Upper lobe of right lung (tissue), 1 donor: ENCODE measurements at regions of chr4 and their contacts with region 1.

Region 1: DNA sequence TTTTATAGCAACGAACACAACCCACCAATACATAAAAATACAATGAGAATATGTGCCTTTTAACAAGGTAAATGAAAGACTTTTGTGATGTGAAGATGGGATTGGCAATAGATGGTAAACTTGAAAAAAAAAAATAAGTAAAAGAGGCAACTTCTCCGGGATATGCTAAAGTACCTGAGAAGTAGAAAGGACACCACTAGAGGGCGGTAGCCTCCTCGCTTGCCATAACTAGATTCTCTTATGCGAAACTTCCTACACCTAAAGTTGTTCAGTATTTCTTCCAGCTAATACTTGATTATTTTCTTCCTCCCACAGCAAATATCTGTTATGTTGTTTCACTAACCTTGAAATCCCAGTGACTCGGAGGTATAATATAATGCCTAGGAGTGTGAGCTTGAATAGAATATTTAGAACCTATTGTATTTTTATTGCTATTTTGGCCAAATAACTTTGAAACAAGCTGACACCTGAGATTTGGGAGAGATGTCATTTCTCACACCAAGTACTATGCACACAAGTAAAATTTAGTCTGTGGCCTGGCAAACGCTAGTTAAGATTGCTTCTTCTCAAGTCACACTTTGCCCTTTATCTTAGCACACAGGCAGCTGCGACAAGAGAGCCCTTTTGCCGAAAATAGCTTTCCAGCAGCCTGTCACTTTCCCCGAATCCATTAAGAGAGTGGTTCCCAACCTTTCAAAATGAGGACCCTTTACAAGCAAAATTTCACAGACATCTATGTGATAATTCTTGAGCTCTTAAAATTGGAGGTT is 44.9 kb upstream of the PDLIM5 start:
- DNase-seq: no peak
- ATAC-seq: peak; percentile 90
- H3K4me3 ChIP-seq: no peak overlapping the region
- H3K27ac ChIP-seq: no peak overlapping the region
- H3K4me1 ChIP-seq: no peaks in the 10 kb centered on the region
- H3K27me3 ChIP-seq: no peaks in the 10 kb centered on the region
- CTCF ChIP-seq: peak; percentile 94

Region 2: GRCh38 chr4:94262163-94263016 is 144.5 kb before region 1 on chr4:
- intact Hi-C with region 1: no loop called
- DNase-seq: no peak
- ATAC-seq: no peak
- H3K4me3 ChIP-seq: no peak overlapping the region
- H3K27ac ChIP-seq: no peak overlapping the region
- H3K4me1 ChIP-seq: no peaks in the 10 kb centered on the region
- H3K27me3 ChIP-seq: no peaks in the 10 kb centered on the region
- CTCF ChIP-seq: no peak

Region 3: GRCh38 chr4:94595879-94596483 is 189.1 kb after region 1 on chr4:
- intact Hi-C with region 1: loop called (anchors 5 kb)
- DNase-seq: no peak
- ATAC-seq: peak; percentile 62
- H3K4me3 ChIP-seq: no peak overlapping the region
- H3K27ac ChIP-seq: no peak overlapping the region
- H3K4me1 ChIP-seq: no peaks in the 10 kb centered on the region
- H3K27me3 ChIP-seq: no peaks in the 10 kb centered on the region
- CTCF ChIP-seq: peak; percentile 71